ENCODE measurements at regions of chr15 and their contacts with region 1.

Region 1: GRCh38 chr15:41230650-41231533 is at the starts of genes CHP1 and EXD1:
- DNase-seq: peak; percentile 97
- ATAC-seq: peak; percentile 97
- H3K4me3 ChIP-seq: peak within 1 kb of the TSS; percentile 80 to 94 (median 88)
- H3K4me3 Mint-ChIP-seq: peak within 1 kb of the TSS; percentile 95
- H3K27ac ChIP-seq: peak within 1 kb of the TSS; percentile 81 to 88
- H3K27ac Mint-ChIP-seq: peak within 1 kb of the TSS; percentile 95
- H3K4me1 ChIP-seq: peaks cover 18 to 24% of the 10 kb centered on the region in 2 donors
- H3K4me1 Mint-ChIP-seq: peaks cover 30% of the 10 kb centered on the region
- H3K27me3 ChIP-seq: no peaks in the 10 kb centered on the region
- H3K27me3 Mint-ChIP-seq: no peaks in the 10 kb centered on the region
- CTCF ChIP-seq: peak; percentile 95
- total RNA-seq, gene CHP1: 39.9 and 40.8 TPM in 2 replicates
- total RNA-seq, gene EXD1: not detected in 2 replicates

Region 2: DNA sequence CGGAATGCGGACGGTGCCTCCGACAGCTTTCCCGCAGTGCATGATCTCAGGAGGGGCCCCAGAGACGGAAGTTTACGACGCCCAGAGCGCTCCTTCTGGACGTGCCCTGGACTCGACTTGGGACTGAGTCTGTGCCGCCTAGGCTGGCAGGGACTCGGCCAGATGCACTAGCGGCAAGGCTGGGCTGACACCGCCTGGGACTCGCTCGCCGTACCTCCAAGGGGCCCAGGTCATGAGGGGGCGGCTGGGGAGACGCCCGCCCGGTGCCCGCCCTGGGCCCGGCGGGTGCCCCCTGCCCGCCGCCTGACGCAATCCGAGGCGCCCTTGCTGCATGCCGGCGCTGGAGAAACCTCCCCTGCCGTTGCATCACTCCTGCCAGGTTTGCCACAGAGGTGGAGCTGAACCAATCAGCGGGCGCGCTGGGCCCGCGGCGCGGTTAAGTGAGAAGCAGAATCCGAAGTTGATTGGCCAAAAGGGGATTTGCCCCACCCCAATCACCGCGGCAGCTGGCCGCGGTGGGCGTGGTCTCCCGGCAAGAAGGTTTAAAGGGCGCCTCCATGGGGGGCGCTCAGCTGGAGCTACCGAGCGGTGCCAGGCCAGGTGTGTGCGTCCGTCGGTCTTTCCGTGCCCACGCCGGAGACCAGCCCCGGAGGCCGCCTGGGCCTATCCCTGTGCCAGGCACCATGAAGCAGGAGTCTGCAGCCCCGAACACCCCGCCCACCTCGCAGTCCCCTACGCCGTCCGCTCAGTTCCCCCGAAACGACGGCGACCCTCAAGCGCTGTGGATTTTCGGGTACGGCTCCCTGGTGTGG is 277.8 kb before region 1 on chr15 and contains the start of gene CHAC1:
- CTCF ChIA-PET with region 1: no interaction called
- POLR2A ChIA-PET with region 1: no interaction called
- intact Hi-C with region 1: loop called (anchors 1 kb)
- DNase-seq: peak; percentile 95
- ATAC-seq: peak; percentile 97
- H3K4me3 ChIP-seq: peak within 1 kb of the TSS; percentile 40 to 74 (median 64)
- H3K4me3 Mint-ChIP-seq: peak within 1 kb of the TSS; percentile 93
- H3K27ac ChIP-seq: peak within 1 kb of the TSS in 1 of 2 donors; percentile 25
- H3K27ac Mint-ChIP-seq: peak within 1 kb of the TSS; percentile 84
- H3K4me1 ChIP-seq: peaks cover 9 to 14% of the 10 kb centered on the region in 2 donors
- H3K4me1 Mint-ChIP-seq: peaks cover 18% of the 10 kb centered on the region
- H3K27me3 ChIP-seq: peaks cover 0 to 14% (median 2%) of the 10 kb centered on the region in 4 experiments
- H3K27me3 Mint-ChIP-seq: peaks cover 9% of the 10 kb centered on the region
- CTCF ChIP-seq: no peak
- total RNA-seq, gene CHAC1: 3.1 and 3.6 TPM in 2 replicates

Region 3: GRCh38 chr15:41283653-41284426 is 52.9 kb after region 1 on chr15:
- CTCF ChIA-PET with region 1: interaction called, 5 read pairs
- POLR2A ChIA-PET with region 1: interaction called, 10 read pairs
- intact Hi-C with region 1: loop called (anchors 1 kb)
- DNase-seq: peak; percentile 99
- ATAC-seq: peak; percentile 98
- H3K4me3 ChIP-seq: peak overlapping the region; percentile 86 to 97 (median 94)
- H3K4me3 Mint-ChIP-seq: peak overlapping the region; percentile 95
- H3K27ac ChIP-seq: peak overlapping the region; percentile 86 to 90
- H3K27ac Mint-ChIP-seq: peak overlapping the region; percentile 97
- H3K4me1 ChIP-seq: peaks cover 16 to 33% of the 10 kb centered on the region in 2 donors
- H3K4me1 Mint-ChIP-seq: peaks cover 42% of the 10 kb centered on the region
- H3K27me3 ChIP-seq: no peaks in the 10 kb centered on the region
- H3K27me3 Mint-ChIP-seq: no peaks in the 10 kb centered on the region
- CTCF ChIP-seq: no peak

Region 4: GRCh38 chr15:41331833-41332787 is 101.2 kb after region 1 on chr15 and contains the start of gene OIP5:
- CTCF ChIA-PET with region 1: interaction called, 3 read pairs
- POLR2A ChIA-PET with region 1: interaction called, 7 read pairs
- intact Hi-C with region 1: loop called (anchors 1 kb)
- DNase-seq: peak; percentile 98
- ATAC-seq: peak; percentile 94
- H3K4me3 ChIP-seq: peak within 1 kb of the TSS; percentile 84 to 98 (median 89)
- H3K4me3 Mint-ChIP-seq: peak within 1 kb of the TSS; percentile 99
- H3K27ac ChIP-seq: peak within 1 kb of the TSS; percentile 45 to 76
- H3K27ac Mint-ChIP-seq: peak within 1 kb of the TSS; percentile 95
- H3K4me1 ChIP-seq: peaks cover 13 to 19% of the 10 kb centered on the region in 2 donors
- H3K4me1 Mint-ChIP-seq: peaks cover 27% of the 10 kb centered on the region
- H3K27me3 ChIP-seq: no peaks in the 10 kb centered on the region
- H3K27me3 Mint-ChIP-seq: no peaks in the 10 kb centered on the region
- CTCF ChIP-seq: peak; percentile 57
- total RNA-seq, gene OIP5: 0.84 and 2.3 TPM in 2 replicates

Region 5: GRCh38 chr15:41660235-41661077 is 429.6 kb after region 1 on chr15 and contains the start of gene MGA:
- CTCF ChIA-PET with region 1: interaction called, 4 read pairs
- POLR2A ChIA-PET with region 1: no interaction called
- intact Hi-C with region 1: loop called (anchors 2 kb)
- DNase-seq: peak; percentile 98
- ATAC-seq: peak; percentile 80
- H3K4me3 ChIP-seq: peak within 1 kb of the TSS; percentile 58 to 72 (median 63)
- H3K4me3 Mint-ChIP-seq: peak within 1 kb of the TSS; percentile 89
- H3K27ac ChIP-seq: peak within 1 kb of the TSS; percentile 94 to 95
- H3K27ac Mint-ChIP-seq: peak within 1 kb of the TSS; percentile 96
- H3K4me1 ChIP-seq: peaks cover 26 to 28% of the 10 kb centered on the region in 2 donors
- H3K4me1 Mint-ChIP-seq: peaks cover 44% of the 10 kb centered on the region
- H3K27me3 ChIP-seq: no peaks in the 10 kb centered on the region
- H3K27me3 Mint-ChIP-seq: no peaks in the 10 kb centered on the region
- CTCF ChIP-seq: no peak
- total RNA-seq, gene MGA: 77.2 and 79.7 TPM in 2 replicates